ENCODE measurements at regions of chr11 and their contacts with region 1.

Region 1: DNA sequence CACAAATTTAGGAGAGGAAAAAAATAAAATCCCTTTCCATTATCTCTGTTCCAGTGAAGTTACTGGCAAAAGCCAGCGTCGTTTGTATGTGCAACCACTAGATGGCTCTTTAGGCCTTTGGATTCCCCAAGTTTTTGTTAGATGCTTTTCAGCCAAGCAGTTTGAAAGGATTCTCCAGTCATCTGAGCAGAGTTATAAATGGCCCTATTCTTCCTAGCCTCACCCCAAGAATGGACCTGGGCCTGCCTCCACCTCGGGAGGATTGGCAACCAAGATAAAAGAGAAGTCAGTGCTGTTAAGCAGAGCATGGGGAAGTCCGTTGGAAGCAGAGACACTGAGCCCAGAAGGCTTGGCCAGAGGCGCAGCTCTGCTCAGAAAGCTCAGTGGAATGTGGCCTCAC is 15.4 kb downstream of the FAM181B start:
- DNase-seq: peak; percentile 37 to 59 (median 48)
- ATAC-seq: peak; percentile 86
- H3K4me3 ChIP-seq: no peak overlapping the region
- H3K27ac ChIP-seq: no peak overlapping the region
- H3K4me1 ChIP-seq: no peaks in the 10 kb centered on the region
- H3K27me3 ChIP-seq: peaks cover 5 to 14% of the 10 kb centered on the region in 2 experiments
- CTCF ChIP-seq: peak; percentile 73 to 91 (median 79)
- EP300 ChIP-seq: no peak
- POLR2A ChIP-seq: no peak
- RAD21 ChIP-seq: peak; percentile 90

Region 2: DNA sequence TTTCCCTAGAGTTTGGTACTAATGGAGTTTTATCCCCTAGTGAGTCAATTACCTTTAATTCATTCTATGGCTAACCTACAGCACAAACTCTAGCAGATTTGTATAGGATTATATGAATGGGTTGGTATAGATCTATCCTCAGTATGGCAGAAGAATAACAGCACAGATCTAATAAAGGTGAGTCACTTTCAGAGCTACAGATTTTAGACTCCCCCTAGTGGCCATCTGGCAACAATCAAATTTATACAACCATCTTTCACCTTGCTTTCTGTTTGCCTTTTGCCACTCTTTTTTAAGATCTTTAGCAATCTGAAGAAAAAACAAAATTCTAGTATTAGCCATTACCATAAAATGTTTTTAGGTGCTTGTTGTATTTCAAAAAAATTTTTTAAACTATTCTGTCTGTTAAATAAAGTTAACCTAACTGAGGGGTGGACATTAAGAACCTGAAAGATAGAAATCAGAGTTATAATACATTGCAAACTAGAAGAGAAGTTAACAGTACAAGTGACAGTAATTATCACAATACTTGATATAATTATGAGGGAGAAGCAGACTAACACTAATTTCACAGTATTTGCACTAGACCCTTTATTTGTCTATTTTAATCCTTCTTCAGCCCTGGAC is 209.1 kb after region 1 on chr11:
- CTCF ChIA-PET with region 1: no interaction called
- POLR2A ChIA-PET with region 1: no interaction called
- in situ Hi-C with region 1: no loop called
- intact Hi-C with region 1: loop called (anchors 2 kb)
- DNase-seq: peak; percentile 47 to 62 (median 51)
- ATAC-seq: peak; percentile 88
- H3K4me3 ChIP-seq: no peak overlapping the region
- H3K27ac ChIP-seq: no peak overlapping the region
- H3K4me1 ChIP-seq: peaks cover 0 to 6% of the 10 kb centered on the region in 2 experiments; a peak in 2 of 5 replicates
- H3K27me3 ChIP-seq: no peaks in the 10 kb centered on the region
- CTCF ChIP-seq: peak; percentile 71 to 80 (median 73)
- EP300 ChIP-seq: no peak
- POLR2A ChIP-seq: no peak
- RAD21 ChIP-seq: peak; percentile 48 to 81; a peak in 3 of 4 replicates

Region 3: DNA sequence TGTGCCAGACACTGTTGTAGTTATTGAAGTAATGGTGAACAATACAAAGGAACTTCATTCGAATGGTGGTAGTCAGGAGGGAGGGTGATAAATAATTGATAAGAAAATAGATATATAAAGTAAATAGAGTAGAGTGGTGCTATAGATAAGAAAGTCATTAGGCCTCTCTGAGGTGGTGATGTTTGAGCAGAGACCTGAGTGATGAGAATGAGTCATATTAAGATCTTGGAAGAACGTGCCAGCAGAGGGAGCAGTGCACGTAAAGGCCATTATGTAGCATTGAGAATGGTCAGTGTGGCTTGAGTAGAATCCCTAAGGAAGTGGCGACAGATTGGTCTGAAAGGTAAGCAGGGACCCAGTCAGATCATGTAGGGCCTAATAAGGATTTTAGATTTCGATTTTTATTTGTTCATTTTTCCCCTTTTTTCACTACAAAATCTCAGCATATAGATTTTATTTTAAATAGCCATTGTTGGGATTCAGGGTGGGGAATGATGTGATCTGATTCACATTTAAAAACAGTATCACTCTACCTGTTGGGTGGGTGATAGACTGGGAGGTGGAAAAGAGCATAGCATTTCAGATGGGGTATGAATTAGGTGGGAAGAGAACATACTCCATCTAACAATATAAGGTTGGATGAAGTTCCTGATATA is 523.1 kb after region 1 on chr11:
- CTCF ChIA-PET with region 1: no interaction called
- POLR2A ChIA-PET with region 1: no interaction called
- in situ Hi-C with region 1: no loop called
- intact Hi-C with region 1: loop called (anchors 5 kb)
- DNase-seq: peak; percentile 47 to 81 (median 53)
- ATAC-seq: peak; percentile 99
- H3K4me3 ChIP-seq: no peak overlapping the region
- H3K27ac ChIP-seq: no peak overlapping the region
- H3K4me1 ChIP-seq: no peaks in the 10 kb centered on the region
- H3K27me3 ChIP-seq: no peaks in the 10 kb centered on the region
- CTCF ChIP-seq: peak; percentile 66 to 83 (median 70)
- EP300 ChIP-seq: no peak
- POLR2A ChIP-seq: no peak
- RAD21 ChIP-seq: peak; percentile 12 to 60; a peak in 2 of 4 replicates

Region 4: DNA sequence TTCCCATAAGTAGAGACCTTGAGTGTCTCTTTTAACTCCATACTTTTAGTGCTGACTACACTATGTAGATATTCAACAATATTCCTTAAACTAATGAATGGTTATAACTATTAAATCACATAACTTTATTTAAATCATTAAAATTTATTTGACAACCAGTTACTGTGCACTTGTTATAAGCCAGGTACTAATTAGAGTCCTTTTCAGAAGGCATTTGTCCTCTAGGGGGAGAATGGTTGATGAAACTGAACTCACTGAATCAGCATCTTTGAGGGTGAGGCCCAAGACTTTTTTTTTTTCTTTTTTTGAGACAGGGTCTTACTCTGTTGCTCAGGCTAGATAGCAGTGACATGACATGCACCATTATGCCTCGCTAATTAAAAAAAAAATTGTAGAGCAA is 1083.5 kb after region 1 on chr11:
- CTCF ChIA-PET with region 1: no interaction called
- POLR2A ChIA-PET with region 1: no interaction called
- in situ Hi-C with region 1: loop called (anchors 10 kb)
- intact Hi-C with region 1: no loop called
- DNase-seq: no peak
- ATAC-seq: no peak
- H3K4me3 ChIP-seq: no peak overlapping the region
- H3K27ac ChIP-seq: no peak overlapping the region
- H3K4me1 ChIP-seq: no peaks in the 10 kb centered on the region
- H3K27me3 ChIP-seq: no peaks in the 10 kb centered on the region
- CTCF ChIP-seq: 0 out of 6 replicates have a peak, but pooled peaks of 1 of the 3 experiments have one; percentile 13
- EP300 ChIP-seq: no peak
- POLR2A ChIP-seq: no peak
- RAD21 ChIP-seq: no peak